ENCODE measurements at regions of chr3 and their contacts with region 1.

Region 1: GRCh38 chr3:73086071-73086494 is 24.6 kb downstream of the EBLN2 start:
- DNase-seq: peak; percentile 61

Region 2: DNA sequence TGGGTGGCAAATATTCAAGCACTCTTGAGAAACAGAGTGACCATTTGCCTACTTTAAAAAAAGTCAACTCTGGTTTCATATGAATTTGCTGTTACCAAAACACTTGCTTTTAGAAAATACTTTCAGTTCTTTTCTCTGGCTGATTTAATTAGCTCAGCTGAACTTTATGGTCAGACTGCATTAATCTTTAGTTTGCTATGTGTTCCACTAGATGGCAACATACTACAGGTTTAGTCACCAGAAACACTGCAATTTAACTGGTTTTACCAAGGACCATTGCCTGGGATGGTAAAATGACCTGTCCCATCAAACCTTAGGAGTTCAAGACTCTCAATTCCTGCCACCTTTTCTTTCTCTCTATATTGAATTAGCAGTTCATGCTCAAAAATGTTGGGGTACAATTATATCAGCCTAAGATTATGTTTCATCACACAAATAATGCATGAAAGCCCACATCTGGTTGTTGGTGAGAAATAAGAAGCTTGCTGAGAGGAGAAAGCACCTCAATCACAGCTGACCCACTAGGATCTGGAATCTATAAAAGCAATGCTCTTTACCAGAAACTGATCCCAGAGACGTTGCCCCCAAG is 1375.1 kb before region 1 on chr3:
- in situ Hi-C with region 1: loop called (anchors 25 kb)
- DNase-seq: peak; percentile 46

Region 3: DNA sequence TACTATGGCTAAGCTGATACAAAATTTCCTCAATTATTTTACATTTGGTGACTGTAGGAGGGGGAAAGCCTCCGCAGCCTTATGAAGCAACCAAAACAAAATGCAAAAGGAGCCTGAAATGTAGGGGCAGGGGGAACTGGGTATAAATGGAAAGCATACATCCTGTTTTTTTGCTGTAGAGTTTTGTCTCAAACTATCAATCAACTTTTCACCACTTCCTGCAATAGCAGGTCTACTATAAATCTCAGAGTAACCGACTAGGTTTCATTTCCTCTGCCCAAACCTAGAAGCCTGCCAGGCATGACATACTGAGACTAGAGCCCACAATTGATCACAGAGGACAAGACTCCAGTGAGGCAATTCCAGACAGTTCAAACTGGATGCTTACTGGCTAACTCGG is 329.2 kb before region 1 on chr3:
- in situ Hi-C with region 1: no loop called
- DNase-seq: peak; percentile 86